OCI-LY7 (cell line): ENCODE measurements at regions of chr7 and their contacts with region 1.

Region 1: GRCh38 chr7:134084488-134085144 is 42.5 kb upstream of the LRGUK start:
- DNase-seq: peak; percentile 79
- H3K4me3 ChIP-seq: no peak overlapping the region
- H3K27ac ChIP-seq: peak overlapping the region; percentile 47
- H3K4me1 ChIP-seq: peaks cover 20% of the 10 kb centered on the region
- CTCF ChIP-seq: peak; percentile 39; the same call in 1 of the 2 replicates

Region 2: GRCh38 chr7:133985300-133985699 is 99.3 kb before region 1 on chr7:
- CTCF ChIA-PET with region 1: no interaction called
- POLR2A ChIA-PET with region 1: no interaction called
- intact Hi-C with region 1: no loop called
- DNase-seq: no peak
- H3K4me3 ChIP-seq: no peak overlapping the region
- H3K27ac ChIP-seq: no peak overlapping the region
- H3K4me1 ChIP-seq: no peaks in the 10 kb centered on the region
- CTCF ChIP-seq: no peak

Region 3: DNA sequence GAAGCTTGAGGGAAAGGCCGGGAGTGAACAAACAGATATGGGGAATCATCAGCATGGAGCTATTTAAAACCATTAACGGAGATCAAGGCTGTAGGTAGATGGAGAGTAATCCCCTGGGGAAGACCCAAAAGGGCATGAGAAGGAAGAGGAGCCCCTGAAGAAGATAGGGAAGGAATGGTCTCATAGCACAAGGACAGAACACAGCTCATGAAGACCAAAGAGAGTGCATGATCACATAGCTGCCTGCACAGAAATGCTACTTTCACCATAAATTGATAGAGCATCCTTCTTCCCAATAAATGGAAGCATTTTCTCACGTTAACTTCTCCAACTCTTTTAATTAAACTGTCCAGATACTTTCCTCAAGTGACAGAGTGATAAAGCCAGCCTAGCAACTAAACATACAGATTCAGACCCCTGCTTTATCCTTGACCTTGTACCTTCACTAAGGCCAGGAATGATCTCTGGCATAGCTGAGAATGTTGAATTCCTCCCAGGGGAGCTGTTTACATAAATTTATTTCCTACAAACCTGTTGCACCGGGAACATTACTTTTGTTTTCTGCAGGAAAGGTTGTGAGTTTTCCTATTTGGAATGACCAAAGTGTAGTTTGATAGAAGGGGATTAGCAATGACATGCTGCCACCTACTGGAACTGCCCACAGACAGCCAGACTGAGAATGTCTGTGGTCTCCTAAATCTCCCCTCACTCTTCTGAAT is 68.2 kb before region 1 on chr7:
- CTCF ChIA-PET with region 1: interaction called, 3 read pairs
- POLR2A ChIA-PET with region 1: interaction called, 4 read pairs
- intact Hi-C with region 1: loop called (anchors 1 kb)
- DNase-seq: peak; percentile 17
- H3K4me3 ChIP-seq: no peak overlapping the region
- H3K27ac ChIP-seq: no peak overlapping the region
- H3K4me1 ChIP-seq: no peaks in the 10 kb centered on the region
- CTCF ChIP-seq: peak; percentile 86

Region 4: DNA sequence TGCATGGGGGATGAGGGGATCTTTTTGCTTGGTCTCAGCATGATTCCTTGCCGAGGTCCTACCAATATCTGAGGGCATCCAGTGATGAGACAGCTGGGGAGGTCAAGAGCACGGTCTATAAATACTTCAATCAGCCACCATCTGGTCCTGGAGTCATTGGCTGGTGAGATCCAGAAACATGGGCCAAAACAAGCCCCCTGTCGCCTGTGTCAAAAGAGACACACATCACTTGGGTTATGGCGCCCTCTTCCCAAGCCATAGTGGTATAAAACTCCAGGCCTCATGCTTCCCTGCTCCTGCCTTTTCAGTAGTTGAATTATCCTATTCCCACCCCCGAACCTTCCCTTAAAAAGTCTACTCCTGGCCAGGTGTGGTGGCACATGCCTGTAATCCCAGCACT is 171.2 kb after region 1 on chr7:
- CTCF ChIA-PET with region 1: no interaction called
- POLR2A ChIA-PET with region 1: no interaction called
- intact Hi-C with region 1: no loop called
- DNase-seq: no peak
- H3K4me3 ChIP-seq: no peak overlapping the region
- H3K27ac ChIP-seq: no peak overlapping the region
- H3K4me1 ChIP-seq: no peaks in the 10 kb centered on the region
- CTCF ChIP-seq: no peak; the same call in 1 of the 2 replicates